ENCODE measurements at regions of chr2 and their contacts with region 1.

Region 1: GRCh38 chr2:68789603-68790002 is 55.0 kb downstream of the ARHGAP25 start:
- DNase-seq: no peak

Region 2: DNA sequence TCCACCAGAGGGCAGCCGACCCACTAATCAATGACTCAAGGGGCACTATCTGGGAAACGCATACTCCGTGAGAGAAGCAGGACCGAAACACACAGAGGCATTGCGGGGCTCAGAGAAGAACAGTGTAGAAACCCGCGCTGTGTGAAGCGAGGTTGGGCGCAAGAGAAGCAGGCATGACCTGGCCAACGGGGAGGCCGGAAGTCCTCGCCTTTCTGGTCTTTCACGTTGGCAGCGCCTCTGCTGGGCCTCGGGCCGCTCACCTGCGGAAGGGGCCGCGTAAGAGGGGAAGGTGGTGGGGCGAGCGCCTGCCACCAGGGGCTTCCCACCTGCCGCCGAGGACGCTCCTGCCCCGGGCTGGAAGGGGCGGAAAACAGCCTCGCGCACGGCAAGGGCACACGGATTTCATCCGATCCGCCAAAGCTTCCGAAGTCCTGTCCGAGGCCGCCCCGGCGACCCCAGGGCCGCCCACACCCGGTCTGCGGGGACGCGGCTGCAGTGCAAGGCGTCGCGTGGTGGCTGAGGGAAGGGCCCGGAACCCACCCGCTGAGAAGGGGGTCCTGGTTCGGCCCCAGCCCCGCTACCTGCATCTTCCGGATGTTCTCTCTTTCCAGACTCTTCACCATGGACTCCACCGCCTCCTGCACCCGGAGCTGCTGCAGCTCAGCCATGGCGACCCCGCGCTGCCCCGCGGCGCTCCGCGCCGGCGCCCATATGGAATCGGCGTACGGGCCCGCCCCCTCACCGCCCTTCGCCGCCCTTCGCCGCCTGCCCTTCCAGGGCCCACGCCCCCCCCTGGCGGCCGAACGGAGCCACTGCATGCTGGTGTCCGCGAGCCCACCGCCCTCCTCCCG is 1512.0 kb after region 1 on chr2 and contains the start of gene FAM136A:
- intact Hi-C with region 1: loop called in 1 of 2 experiments (anchors 10 kb)
- DNase-seq: peak; percentile 96
- total RNA-seq, gene FAM136A: 19.2 to 24.7 TPM